SK-N-SH (cell line): ENCODE measurements at regions of chr10 and their contacts with region 1.

Region 1: GRCh38 chr10:100878291-100878910 is 34.4 kb upstream of the SLF2 start:
- DNase-seq: peak; percentile 80
- H3K4me3 ChIP-seq: no peak overlapping the region
- H3K27ac ChIP-seq: no peak overlapping the region
- H3K4me1 ChIP-seq: peaks cover 0 to 30% of the 10 kb centered on the region in 2 experiments; a peak in 2 of 4 replicates
- H3K27me3 ChIP-seq: no peaks in the 10 kb centered on the region
- CTCF ChIP-seq: peak; percentile 79
- EP300 ChIP-seq: no peak
- RAD21 ChIP-seq: peak; percentile 96

Region 2: DNA sequence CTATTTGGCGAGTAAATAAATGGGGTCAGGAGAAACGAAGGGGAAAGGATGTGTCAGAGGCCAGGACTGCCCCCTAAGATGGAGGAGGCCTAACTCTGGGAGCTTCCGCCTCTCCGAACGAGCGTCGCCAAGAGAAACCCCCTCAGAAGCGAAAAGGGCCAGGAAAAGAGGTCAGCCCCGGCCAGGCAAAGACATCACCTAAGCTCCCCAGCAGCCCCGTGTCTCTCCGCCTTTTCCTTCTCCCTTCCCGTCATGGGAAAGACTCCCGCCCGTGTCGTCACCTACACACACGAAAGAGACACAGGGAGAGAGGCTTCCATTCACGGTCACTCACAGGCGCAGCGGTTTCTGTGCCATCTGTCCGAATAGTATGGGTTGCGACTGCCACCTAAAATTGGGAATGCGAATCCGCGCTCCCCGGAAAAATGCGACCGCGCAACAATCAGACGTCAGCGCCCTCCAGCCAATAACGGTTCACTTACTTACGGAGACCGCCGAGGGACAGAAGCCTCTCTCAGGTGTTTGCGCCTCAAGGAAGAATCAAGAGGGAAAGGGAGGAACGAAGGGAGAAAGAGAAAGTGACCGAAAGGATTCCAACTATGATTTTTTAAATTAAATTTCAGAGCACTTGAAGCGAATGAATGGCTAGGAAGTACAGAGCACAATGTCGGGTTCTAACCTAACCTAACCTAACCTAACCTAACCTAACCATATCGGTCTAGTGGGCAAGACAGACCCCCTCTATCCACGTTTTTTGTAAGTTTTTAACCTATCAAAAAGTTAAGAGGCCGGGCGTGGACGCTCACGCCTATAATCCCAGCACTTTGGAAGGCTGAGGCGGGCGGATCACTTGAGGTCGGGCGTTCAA is 610.9 kb before region 1 on chr10 and contains the start of gene CWF19L1:
- CTCF ChIA-PET with region 1: no interaction called
- POLR2A ChIA-PET with region 1: no interaction called
- DNase-seq: peak; percentile 87
- H3K4me3 ChIP-seq: peak within 1 kb of the TSS; percentile 84 to 88
- H3K27ac ChIP-seq: peak within 1 kb of the TSS; percentile 62 to 83
- H3K4me1 ChIP-seq: peaks cover 0 to 3% of the 10 kb centered on the region in 2 experiments; a peak in 1 of 4 replicates
- H3K27me3 ChIP-seq: no peaks in the 10 kb centered on the region
- CTCF ChIP-seq: no peak
- EP300 ChIP-seq: no peak
- RAD21 ChIP-seq: no peak
- polyA plus RNA-seq, gene CWF19L1: 7.1 and 10.7 TPM in 2 replicates

Region 3: GRCh38 chr10:100481462-100482081 is 396.8 kb before region 1 on chr10:
- CTCF ChIA-PET with region 1: interaction called, 11 read pairs
- POLR2A ChIA-PET with region 1: no interaction called
- DNase-seq: peak; percentile 88
- H3K4me3 ChIP-seq: peak overlapping the region; percentile 54 to 65
- H3K27ac ChIP-seq: no peak overlapping the region
- H3K4me1 ChIP-seq: peaks cover 0 to 13% of the 10 kb centered on the region in 2 experiments; a peak in 1 of 4 replicates
- H3K27me3 ChIP-seq: peaks cover 25% of the 10 kb centered on the region; the same call in 1 of the 2 replicates
- CTCF ChIP-seq: peak; percentile 18
- EP300 ChIP-seq: no peak
- RAD21 ChIP-seq: peak; percentile 14; the same call in 1 of the 2 replicates

Region 4: DNA sequence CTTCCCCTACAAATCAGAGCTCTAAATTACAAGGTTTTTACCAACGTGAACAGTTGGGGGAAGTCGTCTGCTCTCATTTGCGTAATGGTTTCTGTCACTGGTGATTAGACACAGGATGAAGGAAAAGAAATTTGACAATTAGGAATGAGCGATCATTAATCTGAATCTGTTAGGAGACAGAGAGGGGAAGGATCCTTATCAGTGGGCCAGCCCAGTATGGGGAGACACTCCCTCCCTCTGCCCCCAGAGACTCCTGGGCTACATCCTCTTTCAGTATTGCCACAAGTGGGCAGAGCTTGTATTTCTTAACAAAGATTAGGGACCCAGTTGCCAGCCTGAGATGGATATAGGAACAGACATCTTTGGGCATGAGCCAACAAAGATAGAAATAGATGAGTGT is 327.2 kb before region 1 on chr10:
- CTCF ChIA-PET with region 1: interaction called, 16 read pairs
- POLR2A ChIA-PET with region 1: no interaction called
- DNase-seq: no peak
- H3K4me3 ChIP-seq: no peak overlapping the region
- H3K27ac ChIP-seq: no peak overlapping the region; a peak in 1 of 4 replicates
- H3K4me1 ChIP-seq: peaks cover 0 to 8% of the 10 kb centered on the region in 2 experiments; a peak in 1 of 4 replicates
- H3K27me3 ChIP-seq: no peaks in the 10 kb centered on the region
- CTCF ChIP-seq: no peak
- EP300 ChIP-seq: no peak
- RAD21 ChIP-seq: no peak

Region 5: GRCh38 chr10:100728928-100729861 is 149.2 kb before region 1 on chr10:
- CTCF ChIA-PET with region 1: interaction called, 27 read pairs
- POLR2A ChIA-PET with region 1: no interaction called
- DNase-seq: peak; percentile 83
- H3K4me3 ChIP-seq: no peak overlapping the region; a peak in 1 of 4 replicates
- H3K27ac ChIP-seq: no peak overlapping the region
- H3K4me1 ChIP-seq: peaks cover 0 to 11% of the 10 kb centered on the region in 2 experiments; a peak in 1 of 4 replicates
- H3K27me3 ChIP-seq: peaks cover 91% of the 10 kb centered on the region
- CTCF ChIP-seq: peak; percentile 40
- EP300 ChIP-seq: no peak
- RAD21 ChIP-seq: peak; percentile 64

Region 6: GRCh38 chr10:100827819-100828737 is 50.3 kb before region 1 on chr10:
- CTCF ChIA-PET with region 1: interaction called, 11 read pairs
- POLR2A ChIA-PET with region 1: no interaction called
- DNase-seq: peak; percentile 91
- H3K4me3 ChIP-seq: peak overlapping the region; percentile 38 to 39
- H3K27ac ChIP-seq: no peak overlapping the region
- H3K4me1 ChIP-seq: peaks cover 0 to 17% of the 10 kb centered on the region in 2 experiments; a peak in 1 of 4 replicates
- H3K27me3 ChIP-seq: peaks cover 77% of the 10 kb centered on the region
- CTCF ChIP-seq: no peak; the same call in 1 of the 2 replicates
- EP300 ChIP-seq: no peak
- RAD21 ChIP-seq: peak; percentile 64

Region 7: DNA sequence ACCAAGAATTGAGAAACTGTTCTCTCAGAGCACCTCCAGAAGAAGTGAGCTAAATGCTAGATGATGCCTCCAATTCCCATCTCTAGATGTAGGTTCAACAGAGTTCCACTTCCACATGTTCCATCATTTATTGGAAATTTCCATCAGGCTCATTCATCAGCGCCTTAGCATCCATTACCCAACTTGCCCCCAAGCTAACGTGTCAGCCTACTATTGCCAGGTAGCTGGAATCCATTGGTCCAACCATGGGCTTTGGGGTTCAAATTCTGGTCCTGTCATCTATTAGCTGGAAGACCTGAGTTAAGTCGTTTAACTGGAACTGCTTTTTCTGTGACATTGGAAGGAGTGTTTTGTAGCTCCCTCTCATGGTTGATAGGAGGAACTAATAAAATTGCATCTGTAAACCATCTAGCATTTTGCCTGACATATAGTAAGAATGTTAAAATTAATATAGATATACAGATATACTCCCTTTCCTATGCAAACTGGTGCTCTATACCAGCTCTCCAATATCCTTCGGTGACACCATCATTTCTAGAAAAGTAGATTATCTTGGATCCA is 10.5 kb after region 1 on chr10:
- CTCF ChIA-PET with region 1: interaction called, 28 read pairs
- POLR2A ChIA-PET with region 1: no interaction called
- DNase-seq: no peak
- H3K4me3 ChIP-seq: no peak overlapping the region
- H3K27ac ChIP-seq: no peak overlapping the region
- H3K4me1 ChIP-seq: peaks cover 0 to 11% of the 10 kb centered on the region in 2 experiments; a peak in 3 of 4 replicates
- H3K27me3 ChIP-seq: no peaks in the 10 kb centered on the region
- CTCF ChIP-seq: peak; percentile 53
- EP300 ChIP-seq: no peak
- RAD21 ChIP-seq: 0 out of 2 replicates have a peak, but pooled peaks have one; percentile 12

Region 8: DNA sequence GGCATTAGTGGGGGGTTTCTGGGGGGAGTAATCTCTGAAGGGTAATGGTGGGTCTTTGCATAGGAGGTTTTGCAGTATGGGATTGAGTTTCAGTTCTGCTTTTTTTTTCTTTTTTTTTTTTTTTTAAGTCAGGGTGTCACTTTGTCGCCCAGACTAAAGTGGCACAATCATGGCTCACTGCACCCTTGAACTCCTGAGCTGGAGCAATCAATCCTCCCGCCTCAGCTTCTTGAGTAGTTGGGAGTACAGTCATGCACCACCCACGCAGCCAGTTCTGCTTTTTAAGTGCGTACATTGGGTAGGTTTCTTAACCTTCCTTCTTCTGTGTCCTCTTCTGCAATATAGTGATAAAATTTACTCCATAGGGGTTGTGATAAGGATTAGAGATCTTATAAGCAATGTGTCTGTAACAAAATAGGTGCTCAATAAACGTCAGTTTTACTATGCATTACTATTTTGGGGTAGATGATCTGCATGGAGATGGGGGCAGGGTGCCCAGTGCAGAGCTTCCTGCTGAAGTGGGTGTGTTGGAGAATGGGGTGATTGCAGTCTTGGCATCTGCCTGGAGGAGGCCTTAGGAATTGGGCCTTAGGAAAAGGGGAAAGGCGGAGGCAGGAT is 193.0 kb after region 1 on chr10:
- CTCF ChIA-PET with region 1: no interaction called
- POLR2A ChIA-PET with region 1: no interaction called
- DNase-seq: no peak
- H3K4me3 ChIP-seq: no peak overlapping the region
- H3K27ac ChIP-seq: no peak overlapping the region
- H3K4me1 ChIP-seq: peaks cover 0 to 4% of the 10 kb centered on the region in 2 experiments; a peak in 1 of 4 replicates
- H3K27me3 ChIP-seq: peaks cover 27% of the 10 kb centered on the region; the same call in 1 of the 2 replicates
- CTCF ChIP-seq: no peak
- EP300 ChIP-seq: no peak
- RAD21 ChIP-seq: no peak